ENCODE measurements at regions of chr9 and their contacts with region 1.

Region 1: DNA sequence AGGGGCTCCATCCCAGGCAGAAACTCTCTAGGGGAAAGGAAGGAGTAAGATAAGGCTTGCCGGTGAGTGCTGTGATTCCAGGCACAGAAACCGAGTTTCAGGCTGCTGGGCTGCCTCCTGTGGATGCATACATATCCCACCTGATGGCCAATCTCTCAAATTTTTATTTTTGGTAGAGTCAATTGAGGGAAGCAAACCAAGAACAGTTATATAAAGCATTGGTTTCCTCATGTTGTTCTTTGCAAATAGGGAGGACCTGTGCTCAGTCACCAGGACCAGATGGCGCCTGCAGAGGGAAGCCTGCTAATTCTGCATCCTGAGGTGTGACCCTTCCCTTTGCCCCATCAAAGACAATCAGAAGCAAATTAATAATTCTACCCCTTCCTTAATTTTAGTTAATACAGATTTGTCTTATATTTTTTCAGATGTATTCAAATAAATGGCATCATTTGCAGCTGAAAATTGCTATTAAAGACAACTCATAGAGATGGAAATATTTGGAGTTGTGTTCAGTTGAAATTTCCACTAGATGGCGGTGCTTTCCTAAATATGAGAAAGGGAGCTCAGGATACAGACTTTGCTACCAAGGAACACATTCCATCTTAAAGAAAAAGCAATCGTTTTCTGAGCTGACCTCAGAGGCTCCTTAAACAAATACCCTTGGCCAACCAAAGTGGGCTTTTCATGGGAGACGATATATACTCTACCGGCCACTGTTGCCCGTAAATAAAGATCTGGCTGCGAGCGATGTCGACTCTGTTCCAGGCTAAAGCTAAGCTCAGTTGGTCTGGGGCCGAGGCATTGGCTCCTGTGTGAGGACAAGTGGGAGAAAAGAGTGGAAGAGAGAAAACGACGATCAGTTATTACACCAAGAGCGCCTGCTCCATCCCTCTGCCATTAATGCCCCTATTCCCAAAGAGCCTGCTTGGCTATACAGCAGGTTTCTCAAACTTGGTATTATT is 225.7 kb upstream of the KLF9 start:
- DNase-seq: peak; percentile 22
- ATAC-seq: peak; percentile 83
- H3K4me3 ChIP-seq: no peak overlapping the region
- H3K27ac ChIP-seq: no peak overlapping the region
- H3K4me1 ChIP-seq: no peaks in the 10 kb centered on the region
- H3K27me3 ChIP-seq: peaks cover 15% of the 10 kb centered on the region
- CTCF ChIP-seq: peak; percentile 55 to 74 (median 68)
- POLR2A ChIP-seq: no peak
- RAD21 ChIP-seq: peak; percentile 80

Region 2: GRCh38 chr9:70654144-70654543 is 14.0 kb after region 1 on chr9:
- CTCF ChIA-PET with region 1: no interaction called
- POLR2A ChIA-PET with region 1: no interaction called
- RAD21 ChIA-PET with region 1: no interaction called
- intact Hi-C with region 1: no loop called
- DNase-seq: no peak
- ATAC-seq: no peak
- H3K4me3 ChIP-seq: no peak overlapping the region
- H3K27ac ChIP-seq: no peak overlapping the region
- H3K4me1 ChIP-seq: no peaks in the 10 kb centered on the region
- H3K27me3 ChIP-seq: 0 out of 2 replicates have a peak, but pooled peaks cover 18% of the 10 kb centered on the region
- CTCF ChIP-seq: no peak
- POLR2A ChIP-seq: no peak
- RAD21 ChIP-seq: no peak

Region 3: GRCh38 chr9:71001780-71002386 is 361.7 kb after region 1 on chr9:
- CTCF ChIA-PET with region 1: interaction called, 32 read pairs
- POLR2A ChIA-PET with region 1: no interaction called
- RAD21 ChIA-PET with region 1: interaction called, 5 read pairs
- intact Hi-C with region 1: loop called (anchors 1 kb)
- DNase-seq: peak; percentile 23
- ATAC-seq: peak; percentile 80
- H3K4me3 ChIP-seq: no peak overlapping the region
- H3K27ac ChIP-seq: no peak overlapping the region
- H3K4me1 ChIP-seq: no peaks in the 10 kb centered on the region
- H3K27me3 ChIP-seq: peaks cover 1% of the 10 kb centered on the region; the same call in 1 of the 2 replicates
- CTCF ChIP-seq: peak; percentile 59 to 77 (median 68); a peak in 5 of 6 replicates
- POLR2A ChIP-seq: no peak
- RAD21 ChIP-seq: peak; percentile 62

Region 4: GRCh38 chr9:71249729-71250317 is 609.7 kb after region 1 on chr9:
- CTCF ChIA-PET with region 1: interaction called, 75 read pairs
- POLR2A ChIA-PET with region 1: interaction called, 3 read pairs
- RAD21 ChIA-PET with region 1: interaction called in 1 of 2 experiments, 3 read pairs
- intact Hi-C with region 1: loop called (anchors 1 kb)
- DNase-seq: peak; percentile 43
- ATAC-seq: peak; percentile 78
- H3K4me3 ChIP-seq: no peak overlapping the region
- H3K27ac ChIP-seq: no peak overlapping the region
- H3K4me1 ChIP-seq: no peaks in the 10 kb centered on the region
- H3K27me3 ChIP-seq: peaks cover 2% of the 10 kb centered on the region; the same call in 1 of the 2 replicates
- CTCF ChIP-seq: peak; percentile 65 to 98 (median 82)
- POLR2A ChIP-seq: no peak
- RAD21 ChIP-seq: peak; percentile 64

Region 5: DNA sequence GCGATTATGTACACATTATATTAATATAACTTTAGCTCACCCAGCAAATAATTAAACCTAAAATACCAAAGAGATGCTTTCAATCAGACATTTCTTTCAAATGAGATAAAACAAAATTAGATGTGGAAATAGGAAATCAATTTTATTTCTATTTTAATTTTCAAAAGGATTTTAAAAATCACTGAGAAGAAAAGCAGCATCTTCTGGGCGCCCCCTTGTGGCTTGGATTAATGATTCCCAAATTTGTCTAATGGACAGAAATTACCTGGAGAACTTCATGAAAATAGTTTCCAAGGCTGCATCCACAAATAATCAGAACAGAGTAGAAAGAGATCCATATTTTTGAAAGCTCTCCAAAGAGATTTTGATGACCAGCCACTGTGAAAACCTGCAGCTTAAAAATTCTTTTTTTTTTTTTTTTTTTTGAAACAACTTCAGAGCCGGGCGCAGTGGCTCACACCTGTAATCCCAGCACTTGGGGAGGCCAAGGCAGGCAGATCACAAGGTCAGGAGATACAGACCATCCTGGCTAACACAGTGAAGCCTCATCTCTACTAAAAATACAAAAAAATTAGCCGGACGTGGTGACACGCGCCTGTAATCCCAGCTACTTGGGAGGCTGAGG is 1179.1 kb after region 1 on chr9:
- CTCF ChIA-PET with region 1: no interaction called
- POLR2A ChIA-PET with region 1: no interaction called
- RAD21 ChIA-PET with region 1: no interaction called
- intact Hi-C with region 1: loop called (anchors 10 kb)
- DNase-seq: peak; percentile 10
- ATAC-seq: no peak
- H3K4me3 ChIP-seq: no peak overlapping the region
- H3K27ac ChIP-seq: no peak overlapping the region
- H3K4me1 ChIP-seq: no peaks in the 10 kb centered on the region
- H3K27me3 ChIP-seq: no peaks in the 10 kb centered on the region
- CTCF ChIP-seq: peak; percentile 55 to 81 (median 68); a peak in 5 of 6 replicates
- POLR2A ChIP-seq: no peak
- RAD21 ChIP-seq: peak; percentile 62

Measured in HCT116 (cell line).